SK-N-SH (cell line): ENCODE measurements at regions of chr3 and their contacts with region 1.

Region 1: DNA sequence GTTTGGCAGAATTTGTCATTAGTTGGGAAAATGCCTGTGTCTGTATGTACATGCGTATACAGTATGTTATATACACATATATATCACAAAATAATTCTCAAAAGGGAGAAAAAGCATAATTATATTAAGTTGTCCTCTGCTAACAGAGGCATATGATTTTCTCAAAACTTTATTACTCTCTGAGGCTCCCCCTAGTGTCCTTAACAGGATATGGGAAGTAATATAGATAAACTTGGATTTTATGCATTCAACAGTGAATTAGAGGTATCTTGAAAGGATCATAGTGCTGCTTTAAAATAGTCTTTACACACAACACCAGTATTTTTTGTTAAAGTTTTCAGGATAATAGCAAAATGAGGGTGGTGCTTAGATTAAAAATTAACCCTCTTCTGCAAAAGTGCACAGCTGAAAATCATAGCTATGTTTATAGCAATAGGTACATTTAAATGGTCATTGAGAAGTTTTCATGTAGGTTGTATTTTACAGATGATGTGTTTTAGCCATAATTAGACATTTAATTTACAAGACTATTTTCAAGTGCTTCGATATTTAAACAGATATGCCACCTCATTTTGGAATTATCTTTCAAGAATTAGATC is 454.0 kb upstream of the ROBO2 start:
- DNase-seq: peak; percentile 34
- H3K4me3 ChIP-seq: no peak overlapping the region; a peak in 1 of 4 replicates
- H3K27ac ChIP-seq: no peak overlapping the region
- H3K4me1 ChIP-seq: no peaks in the 10 kb centered on the region
- H3K27me3 ChIP-seq: no peaks in the 10 kb centered on the region
- CTCF ChIP-seq: peak; percentile 81
- EP300 ChIP-seq: no peak
- RAD21 ChIP-seq: peak; percentile 59

Region 2: GRCh38 chr3:76024640-76025039 is 561.3 kb before region 1 on chr3:
- CTCF ChIA-PET with region 1: interaction called, 12 read pairs
- POLR2A ChIA-PET with region 1: no interaction called
- DNase-seq: peak; percentile 10
- H3K4me3 ChIP-seq: no peak overlapping the region
- H3K27ac ChIP-seq: no peak overlapping the region
- H3K4me1 ChIP-seq: no peaks in the 10 kb centered on the region; a peak in 1 of 4 replicates
- H3K27me3 ChIP-seq: no peaks in the 10 kb centered on the region
- CTCF ChIP-seq: peak; percentile 53
- EP300 ChIP-seq: no peak
- RAD21 ChIP-seq: peak; percentile 81

Region 3: GRCh38 chr3:76410762-76411281 is 175.1 kb before region 1 on chr3:
- CTCF ChIA-PET with region 1: no interaction called
- POLR2A ChIA-PET with region 1: no interaction called
- DNase-seq: no peak
- H3K4me3 ChIP-seq: no peak overlapping the region
- H3K27ac ChIP-seq: no peak overlapping the region
- H3K4me1 ChIP-seq: no peaks in the 10 kb centered on the region
- H3K27me3 ChIP-seq: no peaks in the 10 kb centered on the region
- CTCF ChIP-seq: no peak
- EP300 ChIP-seq: no peak
- RAD21 ChIP-seq: no peak

Region 4: GRCh38 chr3:76561494-76562236 is 24.2 kb before region 1 on chr3:
- CTCF ChIA-PET with region 1: interaction called, 12 read pairs
- POLR2A ChIA-PET with region 1: no interaction called
- DNase-seq: no peak
- H3K4me3 ChIP-seq: no peak overlapping the region
- H3K27ac ChIP-seq: no peak overlapping the region
- H3K4me1 ChIP-seq: no peaks in the 10 kb centered on the region; a peak in 1 of 4 replicates
- H3K27me3 ChIP-seq: no peaks in the 10 kb centered on the region
- CTCF ChIP-seq: no peak
- EP300 ChIP-seq: no peak
- RAD21 ChIP-seq: no peak

Region 5: GRCh38 chr3:76570436-76571057 is 15.3 kb before region 1 on chr3:
- CTCF ChIA-PET with region 1: interaction called, 19 read pairs
- POLR2A ChIA-PET with region 1: no interaction called
- DNase-seq: peak; percentile 20
- H3K4me3 ChIP-seq: no peak overlapping the region; a peak in 1 of 4 replicates
- H3K27ac ChIP-seq: no peak overlapping the region
- H3K4me1 ChIP-seq: no peaks in the 10 kb centered on the region; a peak in 1 of 4 replicates
- H3K27me3 ChIP-seq: no peaks in the 10 kb centered on the region
- CTCF ChIP-seq: peak; percentile 89
- EP300 ChIP-seq: no peak
- RAD21 ChIP-seq: peak; percentile 76

Region 6: GRCh38 chr3:76610150-76610549 is 24.3 kb after region 1 on chr3:
- CTCF ChIA-PET with region 1: interaction called, 10 read pairs
- POLR2A ChIA-PET with region 1: no interaction called
- DNase-seq: no peak
- H3K4me3 ChIP-seq: no peak overlapping the region
- H3K27ac ChIP-seq: no peak overlapping the region
- H3K4me1 ChIP-seq: no peaks in the 10 kb centered on the region
- H3K27me3 ChIP-seq: no peaks in the 10 kb centered on the region
- CTCF ChIP-seq: no peak
- EP300 ChIP-seq: no peak
- RAD21 ChIP-seq: no peak

Region 7: DNA sequence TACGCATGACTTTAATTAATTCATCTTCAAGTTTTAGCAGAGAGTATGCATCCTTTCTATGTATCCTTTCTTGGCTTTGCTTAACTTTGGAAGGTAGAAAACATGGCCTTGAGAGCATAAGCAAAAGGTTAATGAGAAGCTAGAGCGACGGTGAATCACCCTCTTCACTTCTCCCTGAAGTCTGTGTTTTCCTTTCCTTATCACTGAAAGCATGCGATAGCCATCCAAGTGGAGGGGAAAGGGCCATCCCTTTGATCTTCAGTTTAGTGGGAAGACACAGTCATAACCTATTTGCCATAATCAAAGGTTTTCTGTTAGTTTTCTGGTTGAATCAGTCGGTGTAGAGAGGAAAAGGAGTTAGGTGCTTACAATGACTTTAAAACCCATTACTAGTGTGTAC is 100.0 kb after region 1 on chr3:
- CTCF ChIA-PET with region 1: no interaction called
- POLR2A ChIA-PET with region 1: no interaction called
- DNase-seq: no peak
- H3K4me3 ChIP-seq: no peak overlapping the region
- H3K27ac ChIP-seq: no peak overlapping the region
- H3K4me1 ChIP-seq: no peaks in the 10 kb centered on the region; a peak in 1 of 4 replicates
- H3K27me3 ChIP-seq: no peaks in the 10 kb centered on the region
- CTCF ChIP-seq: no peak
- EP300 ChIP-seq: no peak
- RAD21 ChIP-seq: no peak